ENCODE measurements at regions of chr10 and their contacts with region 1.

Region 1: DNA sequence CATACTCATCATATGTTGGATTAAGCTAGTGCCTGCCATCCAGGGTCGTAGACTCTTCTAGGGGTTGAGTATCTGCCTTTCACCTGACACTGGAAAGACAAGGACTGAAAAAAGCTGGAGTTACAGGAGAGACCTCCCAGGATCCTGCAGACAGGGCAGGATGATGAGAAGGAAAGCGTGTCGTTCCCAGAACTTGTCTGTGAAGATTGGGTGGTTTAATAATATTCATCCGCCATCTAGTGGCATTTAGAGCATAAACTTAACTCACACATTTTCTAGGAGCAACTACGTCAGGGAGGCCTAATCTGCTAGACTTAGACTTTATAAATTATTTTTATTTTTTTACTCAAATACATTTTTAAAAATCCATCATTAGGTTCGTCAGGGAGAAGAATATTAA is 59.6 kb downstream of the ADRB1 start:
- DNase-seq: no peak
- ATAC-seq: peak; percentile 87

Region 2: DNA sequence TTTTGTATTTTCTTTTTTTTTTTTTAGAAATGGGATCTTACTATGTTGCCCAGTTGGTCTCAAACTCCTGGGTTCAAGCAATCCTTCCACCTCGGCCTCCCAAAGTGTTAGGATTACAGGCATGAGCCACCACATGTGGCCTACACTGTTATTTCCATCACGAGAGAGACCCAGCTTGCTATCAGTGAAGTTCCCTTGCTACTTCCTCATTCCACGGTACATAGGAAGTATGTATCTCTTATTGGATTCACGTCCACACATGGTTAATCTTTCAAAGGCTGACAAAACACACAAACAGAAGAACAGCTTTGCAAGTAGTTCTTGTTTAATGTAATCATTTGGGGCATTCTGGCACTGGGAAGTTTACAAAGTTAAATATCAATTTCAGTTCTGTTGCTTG is 300.3 kb before region 1 on chr10:
- intact Hi-C with region 1: loop called (anchors 5 kb)
- DNase-seq: no peak
- ATAC-seq: no peak

Measured in sciatic nerve (tissue), 2 donors.